Naive thymus-derived CD4-positive, alpha-beta T cell (primary cell): ENCODE measurements at regions of chr2 and their contacts with region 1.

Region 1: GRCh38 chr2:25362049-25362433 is 20.3 kb upstream of the DNMT3A start:
- DNase-seq: peak; percentile 86 to 99 (median 93)
- ATAC-seq: peak; percentile 98
- H3K4me3 ChIP-seq: peak overlapping the region; percentile 78
- H3K4me3 Mint-ChIP-seq: peak overlapping the region; percentile 83 to 95 (median 89)
- H3K27ac ChIP-seq: peak overlapping the region; percentile 81
- H3K27ac Mint-ChIP-seq: peak overlapping the region; percentile 84 to 96 (median 92)
- H3K4me1 ChIP-seq: peaks cover 3 to 4% of the 10 kb centered on the region in 2 donors
- H3K4me1 Mint-ChIP-seq: peaks cover 11 to 32% (median 25%) of the 10 kb centered on the region in 7 donors
- H3K27me3 ChIP-seq: no peaks in the 10 kb centered on the region
- H3K27me3 Mint-ChIP-seq: no peaks in the 10 kb centered on the region

Region 2: DNA sequence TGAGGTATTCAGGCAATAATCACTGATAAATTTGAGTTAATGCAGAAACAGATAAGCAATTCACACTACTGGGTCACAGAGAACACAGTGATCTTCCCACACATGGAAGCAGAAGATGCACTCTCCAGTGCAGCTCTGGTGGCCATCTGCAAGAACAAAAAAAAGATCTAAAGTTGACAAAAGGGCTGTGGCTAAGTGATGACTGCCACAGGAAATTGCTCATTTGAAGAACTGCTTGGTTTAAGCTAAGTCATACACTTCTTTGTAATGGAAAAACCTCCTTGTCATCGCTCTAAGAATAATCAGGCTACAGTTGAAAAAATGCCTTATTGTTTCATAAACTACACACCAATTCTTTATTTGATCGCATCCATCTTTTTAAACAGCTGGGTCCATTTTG is 196.2 kb after region 1 on chr2:
- CTCF ChIA-PET with region 1: no interaction called
- POLR2A ChIA-PET with region 1: no interaction called
- intact Hi-C with region 1: loop called in 1 of 2 experiments (anchors 2 kb)
- DNase-seq: peak in 6 of 9 donors; percentile 25 to 48 (median 32)
- ATAC-seq: peak; percentile 94
- H3K4me3 ChIP-seq: no peak overlapping the region
- H3K4me3 Mint-ChIP-seq: peak overlapping the region in 1 of 10 donors; percentile 44
- H3K27ac ChIP-seq: no peak overlapping the region
- H3K27ac Mint-ChIP-seq: peak overlapping the region in 3 of 9 donors; percentile 20 to 92 (median 41)
- H3K4me1 ChIP-seq: peaks cover 6 to 8% of the 10 kb centered on the region in 2 donors
- H3K4me1 Mint-ChIP-seq: peaks cover 17 to 56% (median 34%) of the 10 kb centered on the region in 7 donors
- H3K27me3 ChIP-seq: no peaks in the 10 kb centered on the region
- H3K27me3 Mint-ChIP-seq: no peaks in the 10 kb centered on the region

Region 3: DNA sequence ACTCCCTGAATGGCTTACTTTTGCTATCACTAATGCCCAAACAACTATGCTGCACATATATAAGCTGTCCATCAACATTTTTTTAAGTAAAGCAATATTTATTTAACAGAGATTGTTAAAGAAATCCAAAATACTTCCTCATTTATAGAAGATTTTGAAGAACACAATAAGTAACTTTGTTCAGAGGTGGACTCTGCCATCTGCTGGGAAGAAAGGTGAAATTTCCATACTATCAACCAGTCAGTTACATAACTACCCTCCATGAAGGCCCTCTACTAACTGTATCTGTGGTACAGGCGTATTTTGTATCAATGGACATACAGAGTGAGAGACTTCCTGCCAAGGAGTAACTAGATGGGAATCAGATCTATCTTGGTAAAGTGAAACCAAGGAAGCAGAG is 205.4 kb after region 1 on chr2:
- CTCF ChIA-PET with region 1: no interaction called
- POLR2A ChIA-PET with region 1: no interaction called
- intact Hi-C with region 1: loop called in 1 of 2 experiments (anchors 1 kb)
- DNase-seq: peak in 4 of 9 donors; percentile 6 to 27 (median 16)
- ATAC-seq: peak; percentile 67
- H3K4me3 ChIP-seq: no peak overlapping the region
- H3K4me3 Mint-ChIP-seq: no peak overlapping the region
- H3K27ac ChIP-seq: no peak overlapping the region
- H3K27ac Mint-ChIP-seq: peak overlapping the region in 1 of 9 donors; percentile 47
- H3K4me1 ChIP-seq: no peaks in the 10 kb centered on the region
- H3K4me1 Mint-ChIP-seq: peaks cover 0 to 14% (median 4%) of the 10 kb centered on the region in 7 donors
- H3K27me3 ChIP-seq: no peaks in the 10 kb centered on the region
- H3K27me3 Mint-ChIP-seq: no peaks in the 10 kb centered on the region